ENCODE measurements at regions of chr1 and their contacts with region 1.

Region 1: GRCh38 chr1:179190861-179191260 is 38.6 kb downstream of the ABL2 start:
- DNase-seq: no peak
- H3K4me3 Mint-ChIP-seq: no peak overlapping the region
- H3K27ac Mint-ChIP-seq: peak overlapping the region; percentile 44
- H3K4me1 Mint-ChIP-seq: peaks cover 18% of the 10 kb centered on the region
- H3K27me3 Mint-ChIP-seq: no peaks in the 10 kb centered on the region

Region 2: GRCh38 chr1:178774263-178774662 is 416.6 kb before region 1 on chr1:
- intact Hi-C with region 1: loop called (anchors 5 kb)
- DNase-seq: no peak
- H3K4me3 Mint-ChIP-seq: no peak overlapping the region
- H3K27ac Mint-ChIP-seq: no peak overlapping the region
- H3K4me1 Mint-ChIP-seq: no peaks in the 10 kb centered on the region
- H3K27me3 Mint-ChIP-seq: peaks cover 2% of the 10 kb centered on the region

Region 3: DNA sequence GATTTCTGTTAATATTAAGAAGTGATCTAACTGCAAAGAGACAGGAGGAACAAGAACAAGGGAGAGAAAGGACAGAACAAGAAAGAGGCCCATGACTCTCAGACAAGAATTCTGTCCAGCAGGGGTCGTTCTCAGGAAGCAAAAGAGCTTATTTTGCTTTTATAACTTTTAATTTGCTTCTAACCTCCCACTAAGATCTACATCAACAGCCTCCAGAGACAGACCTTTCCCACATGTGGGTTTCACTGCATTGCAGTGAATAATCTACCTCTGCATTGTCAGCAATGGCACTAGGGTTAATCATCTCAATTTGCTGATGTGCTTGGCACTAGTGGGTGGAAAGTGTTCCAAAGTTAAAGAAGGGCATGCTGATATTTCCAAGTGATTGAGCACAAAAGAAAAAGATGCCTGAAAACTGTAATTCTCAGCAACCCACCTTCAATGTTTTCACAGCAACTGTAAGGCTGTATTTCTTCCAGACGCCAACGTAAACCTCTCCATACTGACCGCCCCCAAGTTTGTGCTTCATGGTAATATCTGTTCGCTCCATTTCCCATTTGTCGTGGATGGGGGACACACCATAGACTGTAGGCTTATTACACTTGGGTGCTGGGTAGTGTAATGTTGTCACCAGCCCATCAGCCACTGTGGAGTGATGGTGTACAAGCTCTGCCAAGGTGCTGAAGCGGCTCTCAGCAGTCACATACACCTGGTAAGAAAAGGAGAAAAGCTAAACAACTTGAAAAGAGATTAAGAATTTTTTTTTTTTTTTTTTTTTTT is 69.5 kb before region 1 on chr1:
- intact Hi-C with region 1: loop called (anchors 1 kb)
- DNase-seq: peak; percentile 13
- H3K4me3 Mint-ChIP-seq: no peak overlapping the region
- H3K27ac Mint-ChIP-seq: no peak overlapping the region
- H3K4me1 Mint-ChIP-seq: peaks cover 9% of the 10 kb centered on the region
- H3K27me3 Mint-ChIP-seq: no peaks in the 10 kb centered on the region

Region 4: GRCh38 chr1:179384027-179384426 is 193.2 kb after region 1 on chr1:
- intact Hi-C with region 1: no loop called
- DNase-seq: no peak
- H3K4me3 Mint-ChIP-seq: no peak overlapping the region
- H3K27ac Mint-ChIP-seq: no peak overlapping the region
- H3K4me1 Mint-ChIP-seq: no peaks in the 10 kb centered on the region
- H3K27me3 Mint-ChIP-seq: no peaks in the 10 kb centered on the region